Left colon (tissue), 2 donors: ENCODE measurements at regions of chr22 and their contacts with region 1.

Region 1: DNA sequence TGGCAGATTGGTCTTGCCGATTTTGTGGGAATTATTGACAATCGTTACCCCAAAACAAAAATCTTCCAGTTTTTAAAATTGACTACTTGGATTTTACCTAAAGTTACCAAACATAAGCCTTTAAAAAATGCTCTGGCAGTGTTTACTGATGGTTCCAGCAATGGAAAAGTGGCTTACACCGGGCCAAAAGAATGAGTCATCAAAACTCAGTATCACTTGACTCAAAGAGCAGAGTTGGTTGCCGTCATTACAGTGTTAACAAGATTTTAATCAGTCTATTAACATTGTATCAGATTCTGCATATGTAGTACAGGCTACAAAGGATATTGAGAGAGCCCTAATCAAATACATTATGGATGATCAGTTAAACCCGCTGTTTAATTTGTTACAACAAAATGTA is 37.2 kb downstream of the IGLL1 start:
- DNase-seq: no peak
- ATAC-seq: no peak

Region 2: GRCh38 chr22:23509571-23510305 is 33.2 kb before region 1 on chr22:
- intact Hi-C with region 1: no loop called
- DNase-seq: no peak
- ATAC-seq: no peak

Region 3: DNA sequence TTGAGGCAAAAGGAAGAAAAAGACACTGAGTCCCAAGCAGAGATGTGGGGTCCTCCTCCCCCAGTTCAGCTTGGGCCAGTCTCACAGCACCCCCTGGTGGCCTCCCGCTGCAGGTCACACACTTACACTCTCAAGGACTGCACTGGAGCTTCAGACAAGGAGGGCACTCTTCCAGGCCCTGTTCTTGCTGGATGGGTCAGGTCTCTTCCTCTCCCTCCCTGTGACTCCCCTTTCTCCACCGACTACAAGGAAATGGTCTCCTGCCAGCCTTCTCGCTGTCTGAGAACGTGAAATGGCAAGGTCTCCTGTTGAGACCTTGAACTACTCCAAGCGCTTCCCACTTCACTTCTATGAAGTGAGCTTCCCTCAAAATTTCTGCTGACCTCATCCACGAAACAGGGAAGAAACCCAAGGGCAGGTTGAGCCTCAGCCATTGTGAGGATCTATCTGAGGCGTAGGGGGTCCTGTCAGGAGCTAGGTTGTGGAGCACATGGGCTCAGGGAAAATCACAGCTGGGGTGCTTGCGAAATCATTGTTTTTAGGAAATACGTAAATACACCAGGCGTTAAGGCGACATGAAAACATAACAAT is 48.4 kb after region 1 on chr22:
- intact Hi-C with region 1: loop called in 1 of 2 experiments (anchors 10 kb)
- DNase-seq: peak in 1 of 2 donors; percentile 64
- ATAC-seq: peak; percentile 68

Region 4: GRCh38 chr22:23716811-23717801 is 174.2 kb after region 1 on chr22:
- intact Hi-C with region 1: no loop called
- DNase-seq: peak; percentile 83 to 91
- ATAC-seq: peak; percentile 96

Region 5: GRCh38 chr22:23816156-23816976 is 273.4 kb after region 1 on chr22:
- intact Hi-C with region 1: no loop called
- DNase-seq: no peak
- ATAC-seq: no peak